ENCODE measurements at regions of chr7 and their contacts with region 1.

Region 1: DNA sequence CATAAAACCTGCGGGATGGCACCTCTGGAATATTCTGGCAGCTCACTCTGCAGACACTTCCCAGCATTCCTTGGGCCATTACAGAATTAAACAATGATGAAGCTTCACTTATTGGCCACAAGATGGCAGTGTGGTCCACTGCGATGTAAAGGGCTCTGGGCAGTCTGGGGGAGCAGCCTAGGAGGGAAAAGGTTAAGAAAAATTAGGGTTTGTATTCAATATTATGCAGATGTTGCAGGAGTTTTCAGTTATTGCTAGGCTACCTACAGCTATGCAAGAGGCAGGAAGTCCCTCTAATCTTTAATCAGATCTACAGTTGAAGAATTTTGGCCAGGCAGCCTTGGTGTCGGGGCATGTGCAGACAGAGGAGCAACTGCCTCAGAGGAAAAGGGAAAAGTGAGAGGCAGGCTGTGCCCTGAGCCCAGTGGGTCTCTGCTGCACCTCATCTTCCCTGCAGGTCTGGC is 233.2 kb upstream of the PRSS1 start:
- DNase-seq: no peak
- ATAC-seq: peak in 3 of 4 donors; percentile 63 to 78 (median 77)
- H3K4me3 ChIP-seq: no peak overlapping the region
- H3K27ac ChIP-seq: no peak overlapping the region
- H3K4me1 ChIP-seq: peaks cover 0 to 11% (median 0%) of the 10 kb centered on the region in 12 donors
- H3K27me3 ChIP-seq: no peaks in the 10 kb centered on the region
- CTCF ChIP-seq: peak; percentile 39 to 70 (median 60)
- POLR2A ChIP-seq: no peak

Region 2: DNA sequence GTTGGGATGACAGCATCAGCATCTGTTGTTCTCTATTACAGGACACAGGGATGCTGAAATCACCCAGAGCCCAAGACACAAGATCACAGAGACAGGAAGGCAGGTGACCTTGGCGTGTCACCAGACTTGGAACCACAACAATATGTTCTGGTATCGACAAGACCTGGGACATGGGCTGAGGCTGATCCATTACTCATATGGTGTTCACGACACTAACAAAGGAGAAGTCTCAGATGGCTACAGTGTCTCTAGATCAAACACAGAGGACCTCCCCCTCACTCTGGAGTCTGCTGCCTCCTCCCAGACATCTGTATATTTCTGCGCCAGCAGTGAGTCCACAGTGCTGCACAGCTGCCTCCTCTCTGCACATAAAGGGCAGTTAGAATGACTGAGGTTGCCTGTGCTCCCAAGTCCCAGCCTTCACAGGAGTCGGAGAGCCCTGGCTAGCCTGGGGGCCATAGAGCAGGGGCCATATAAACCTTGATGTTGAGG is 116.0 kb before region 1 on chr7:
- intact Hi-C with region 1: no loop called
- DNase-seq: no peak
- ATAC-seq: no peak
- H3K4me3 ChIP-seq: no peak overlapping the region
- H3K27ac ChIP-seq: no peak overlapping the region
- H3K4me1 ChIP-seq: no peaks in the 10 kb centered on the region
- H3K27me3 ChIP-seq: peaks cover 0 to 15% (median 0%) of the 10 kb centered on the region in 9 donors
- CTCF ChIP-seq: no peak
- POLR2A ChIP-seq: no peak

Region 3: DNA sequence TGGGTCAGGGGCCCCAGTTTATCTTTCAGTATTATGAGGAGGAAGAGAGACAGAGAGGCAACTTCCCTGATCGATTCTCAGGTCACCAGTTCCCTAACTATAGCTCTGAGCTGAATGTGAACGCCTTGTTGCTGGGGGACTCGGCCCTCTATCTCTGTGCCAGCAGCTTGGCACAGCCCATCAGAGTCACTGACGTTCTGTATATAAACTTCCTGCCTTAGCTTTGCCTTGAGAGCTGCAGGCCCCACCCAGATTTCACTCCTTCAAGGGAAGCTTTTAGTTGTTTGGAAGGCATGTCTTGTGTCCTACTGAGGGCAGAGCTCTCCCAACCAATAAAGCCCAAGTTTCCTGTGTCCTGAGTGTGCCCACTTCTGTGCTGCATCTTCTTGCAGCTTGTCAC is 15.7 kb before region 1 on chr7:
- intact Hi-C with region 1: loop called in 1 of 10 experiments (anchors 1 kb)
- DNase-seq: no peak
- ATAC-seq: no peak
- H3K4me3 ChIP-seq: no peak overlapping the region
- H3K27ac ChIP-seq: no peak overlapping the region
- H3K4me1 ChIP-seq: peaks cover 0 to 15% (median 0%) of the 10 kb centered on the region in 12 donors
- H3K27me3 ChIP-seq: peaks cover 0 to 25% (median 6%) of the 10 kb centered on the region in 9 donors
- CTCF ChIP-seq: no peak
- POLR2A ChIP-seq: no peak